Dorsolateral prefrontal cortex (tissue), 120 donors: ENCODE measurements at regions of chr7 and their contacts with region 1.

Region 1: GRCh38 chr7:92691578-92691977 is 101.4 kb upstream of the FAM133B start:
- DNase-seq: no peak
- H3K4me3 ChIP-seq: no peak overlapping the region
- H3K27ac ChIP-seq: peak overlapping the region in 6 of 59 donors; percentile 10 to 50 (median 36)
- H3K27me3 ChIP-seq: no peaks in the 10 kb centered on the region
- CTCF ChIP-seq: peak; percentile 36 to 78 (median 62)

Region 2: GRCh38 chr7:92547579-92547978 is 144.0 kb before region 1 on chr7:
- intact Hi-C with region 1: no loop called
- DNase-seq: peak in 4 of 10 donors; percentile 12 to 44 (median 28)
- H3K4me3 ChIP-seq: no peak overlapping the region
- H3K27ac ChIP-seq: no peak overlapping the region
- H3K27me3 ChIP-seq: no peaks in the 10 kb centered on the region
- CTCF ChIP-seq: no peak

Region 3: GRCh38 chr7:92768501-92769393 is 77.2 kb after region 1 on chr7:
- intact Hi-C with region 1: loop called in 1 of 2 experiments (anchors 5 kb)
- DNase-seq: peak in 1 of 10 donors; percentile 29
- H3K4me3 ChIP-seq: peak overlapping the region in 26 of 59 donors; percentile 7 to 44 (median 22)
- H3K27ac ChIP-seq: peak overlapping the region in 58 of 59 donors; percentile 14 to 86 (median 74)
- H3K27me3 ChIP-seq: no peaks in the 10 kb centered on the region
- CTCF ChIP-seq: no peak

Region 4: GRCh38 chr7:92988051-92988450 is 296.5 kb after region 1 on chr7:
- intact Hi-C with region 1: loop called in 1 of 2 experiments (anchors 10 kb)
- DNase-seq: no peak
- H3K4me3 ChIP-seq: no peak overlapping the region
- H3K27ac ChIP-seq: no peak overlapping the region
- H3K27me3 ChIP-seq: no peaks in the 10 kb centered on the region
- CTCF ChIP-seq: peak in 51 of 56 donors; percentile 11 to 67 (median 49)

Region 5: GRCh38 chr7:93133005-93133404 is 441.4 kb after region 1 on chr7:
- intact Hi-C with region 1: no loop called
- DNase-seq: no peak
- H3K4me3 ChIP-seq: no peak overlapping the region
- H3K27ac ChIP-seq: no peak overlapping the region
- H3K27me3 ChIP-seq: no peaks in the 10 kb centered on the region
- CTCF ChIP-seq: no peak